ENCODE measurements at regions of chr6 and their contacts with region 1.

Region 1: GRCh38 chr6:29649701-29650673 is 6.9 kb upstream of the MOG start:
- H3K4me3 ChIP-seq: peak overlapping the region; percentile 61
- H3K27ac ChIP-seq: peak overlapping the region; percentile 18; the same call in 1 of the 2 replicates
- H3K4me1 ChIP-seq: no peaks in the 10 kb centered on the region; the same call in 1 of the 2 replicates
- CTCF ChIP-seq: peak; percentile 93

Region 2: GRCh38 chr6:29376003-29376402 is 274.0 kb before region 1 on chr6:
- CTCF ChIA-PET with region 1: interaction called, 30 read pairs
- POLR2A ChIA-PET with region 1: no interaction called
- H3K4me3 ChIP-seq: no peak overlapping the region
- H3K27ac ChIP-seq: no peak overlapping the region
- H3K4me1 ChIP-seq: no peaks in the 10 kb centered on the region
- CTCF ChIP-seq: no peak

Region 3: DNA sequence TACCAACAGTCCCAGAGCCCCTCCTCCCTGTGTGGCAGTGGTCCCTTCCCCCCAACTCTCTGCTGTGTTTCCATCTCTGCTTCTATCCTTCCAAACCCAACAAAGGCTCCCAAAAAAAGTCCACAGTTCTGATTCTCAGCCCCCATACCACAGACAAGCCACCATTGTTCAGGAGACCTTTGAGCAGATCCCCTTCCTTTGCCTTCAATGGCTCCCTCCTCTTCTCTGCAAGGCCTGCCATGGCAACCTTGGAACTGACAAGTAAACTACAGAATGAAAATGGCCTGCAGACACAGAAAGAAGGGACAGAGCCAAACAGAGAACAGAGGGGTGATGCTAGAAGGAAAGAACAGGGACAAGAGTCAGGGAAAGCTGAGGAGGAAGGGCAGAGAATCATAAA is 41.9 kb before region 1 on chr6:
- CTCF ChIA-PET with region 1: interaction called, 12 read pairs
- POLR2A ChIA-PET with region 1: no interaction called
- H3K4me3 ChIP-seq: no peak overlapping the region
- H3K27ac ChIP-seq: no peak overlapping the region
- H3K4me1 ChIP-seq: no peaks in the 10 kb centered on the region
- CTCF ChIP-seq: no peak

Region 4: GRCh38 chr6:29665942-29666825 is 16.2 kb after region 1 on chr6:
- CTCF ChIA-PET with region 1: interaction called, 287 read pairs
- POLR2A ChIA-PET with region 1: interaction called, 7 read pairs
- H3K4me3 ChIP-seq: no peak overlapping the region
- H3K27ac ChIP-seq: no peak overlapping the region
- H3K4me1 ChIP-seq: peaks cover 3% of the 10 kb centered on the region; the same call in 1 of the 2 replicates
- CTCF ChIP-seq: no peak

Region 5: DNA sequence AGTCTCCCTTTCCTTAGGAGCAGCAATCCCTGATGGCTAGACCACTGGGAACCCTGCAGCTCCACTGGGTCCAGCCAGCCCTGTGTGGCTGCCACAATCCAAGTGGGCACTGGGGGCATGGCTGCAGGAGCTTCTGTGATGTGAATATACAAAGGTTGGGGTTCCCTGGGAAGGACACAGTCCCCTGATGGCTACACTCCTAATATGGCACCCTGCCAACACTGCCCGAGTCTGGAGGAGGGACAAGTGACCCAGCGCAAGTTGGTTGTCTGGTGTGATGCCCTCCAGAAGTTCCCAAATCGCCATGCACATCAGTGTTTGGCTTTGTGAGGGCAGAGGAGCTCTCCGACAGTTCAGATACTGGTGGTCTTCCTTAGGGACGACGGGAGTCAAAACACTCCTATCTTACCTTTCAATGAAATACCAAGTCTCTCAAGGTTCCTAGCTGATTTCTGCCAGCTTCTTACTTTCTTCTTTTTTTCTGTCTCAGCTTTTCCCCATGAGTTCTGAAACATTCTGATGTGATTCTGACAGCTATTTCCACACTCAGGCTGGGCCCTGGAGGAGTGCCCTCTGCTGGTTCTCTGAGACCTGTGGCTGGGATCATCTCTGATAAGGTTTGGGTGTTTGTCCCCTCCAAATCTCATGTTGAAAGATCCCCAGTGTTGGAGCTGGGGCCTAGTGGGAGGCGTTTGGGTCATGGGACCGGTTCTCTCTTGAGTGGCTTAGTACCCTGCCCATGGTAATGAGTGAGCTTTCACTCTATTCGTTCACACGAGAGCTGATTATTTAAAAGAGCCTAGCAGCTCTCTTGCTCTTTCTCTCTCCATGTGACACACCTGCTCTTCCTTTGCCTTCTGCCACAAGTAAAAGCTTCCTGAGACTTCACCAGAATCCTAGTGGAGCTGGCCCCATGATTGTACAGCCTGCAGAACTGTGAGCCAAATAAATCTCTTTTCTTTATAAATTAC is 46.5 kb after region 1 on chr6:
- CTCF ChIA-PET with region 1: interaction called, 164 read pairs
- POLR2A ChIA-PET with region 1: interaction called, 6 read pairs
- H3K4me3 ChIP-seq: no peak overlapping the region
- H3K27ac ChIP-seq: no peak overlapping the region
- H3K4me1 ChIP-seq: no peaks in the 10 kb centered on the region
- CTCF ChIP-seq: peak; percentile 21

Region 6: GRCh38 chr6:29737707-29738630 is 88.0 kb after region 1 on chr6:
- CTCF ChIA-PET with region 1: interaction called, 11 read pairs
- POLR2A ChIA-PET with region 1: interaction called, 3 read pairs
- H3K4me3 ChIP-seq: no peak overlapping the region
- H3K27ac ChIP-seq: no peak overlapping the region
- H3K4me1 ChIP-seq: no peaks in the 10 kb centered on the region
- CTCF ChIP-seq: peak; percentile 87

Region 7: DNA sequence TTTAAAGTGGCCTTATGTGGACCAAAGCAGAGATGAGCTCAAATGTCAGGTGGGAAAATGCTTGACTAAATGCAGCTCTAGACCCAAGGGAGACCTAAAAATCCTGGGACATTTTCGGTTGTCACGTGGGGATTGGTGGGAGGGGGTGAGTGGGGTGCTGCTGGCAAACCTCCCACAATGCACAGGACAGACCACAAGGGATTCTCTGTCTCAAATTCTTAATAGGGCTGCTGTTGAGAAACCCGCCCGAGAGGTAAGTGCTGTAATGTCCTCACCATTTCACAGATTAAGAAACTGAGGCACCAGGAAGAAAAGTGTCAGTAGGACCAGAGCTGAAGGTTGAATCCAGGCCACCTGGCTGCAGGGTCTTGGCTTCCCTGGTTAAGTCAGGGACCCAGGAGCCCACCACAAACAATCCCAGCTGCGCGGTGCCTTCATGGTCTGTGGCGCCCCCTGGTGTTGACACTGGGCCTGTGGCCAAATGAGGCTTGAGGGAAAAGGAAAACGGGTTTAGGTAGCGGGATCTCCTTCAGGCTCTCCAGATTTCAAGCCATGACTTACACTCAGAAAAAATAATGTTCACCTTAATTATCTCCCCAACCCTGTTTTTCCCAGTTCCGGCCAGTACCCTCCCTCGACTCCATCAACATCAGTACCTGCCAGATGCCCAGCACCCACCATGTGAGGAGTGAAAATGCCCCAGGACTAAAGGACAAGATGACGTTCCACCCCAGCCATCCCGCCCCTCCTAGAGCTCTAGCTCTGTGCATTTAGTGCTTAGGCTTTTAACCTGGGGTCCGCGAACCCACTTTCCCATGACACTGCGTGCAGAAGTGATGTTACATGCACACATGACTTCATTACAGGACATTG is 184.8 kb after region 1 on chr6:
- CTCF ChIA-PET with region 1: interaction called, 18 read pairs
- POLR2A ChIA-PET with region 1: interaction called, 3 read pairs
- H3K4me3 ChIP-seq: no peak overlapping the region
- H3K27ac ChIP-seq: no peak overlapping the region
- H3K4me1 ChIP-seq: no peaks in the 10 kb centered on the region
- CTCF ChIP-seq: peak; percentile 58; the same call in 1 of the 2 replicates